ENCODE measurements at regions of chr3 and their contacts with region 1.

Region 1: DNA sequence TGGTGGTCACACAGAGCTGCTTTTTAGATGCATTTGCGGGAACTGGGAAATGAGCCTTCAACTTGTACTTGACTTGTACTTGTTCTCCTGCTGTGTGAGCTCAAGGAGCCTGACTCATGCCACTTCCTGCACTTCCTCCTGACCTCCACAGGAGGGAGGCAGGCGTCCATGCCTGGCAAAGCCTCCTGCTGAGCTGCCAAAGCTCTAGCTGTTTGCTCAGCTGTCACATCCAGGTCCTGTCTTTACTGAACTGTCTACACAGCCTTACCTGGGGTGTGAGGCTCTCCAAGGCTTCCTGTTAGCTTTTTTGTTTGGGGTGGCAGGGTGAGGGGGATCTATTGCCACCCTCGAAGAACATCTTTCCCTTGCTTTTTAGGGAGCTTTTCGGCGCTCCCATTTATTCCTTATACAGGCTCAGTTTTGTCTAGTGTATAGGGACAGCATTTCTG is 6.4 kb downstream of the THPO start:
- DNase-seq: peak; percentile 78
- ATAC-seq: peak; percentile 99
- H3K4me3 Mint-ChIP-seq: no peak overlapping the region
- H3K27ac Mint-ChIP-seq: no peak overlapping the region
- H3K4me1 Mint-ChIP-seq: peaks cover 9% of the 10 kb centered on the region
- H3K27me3 Mint-ChIP-seq: peaks cover 24% of the 10 kb centered on the region

Region 2: DNA sequence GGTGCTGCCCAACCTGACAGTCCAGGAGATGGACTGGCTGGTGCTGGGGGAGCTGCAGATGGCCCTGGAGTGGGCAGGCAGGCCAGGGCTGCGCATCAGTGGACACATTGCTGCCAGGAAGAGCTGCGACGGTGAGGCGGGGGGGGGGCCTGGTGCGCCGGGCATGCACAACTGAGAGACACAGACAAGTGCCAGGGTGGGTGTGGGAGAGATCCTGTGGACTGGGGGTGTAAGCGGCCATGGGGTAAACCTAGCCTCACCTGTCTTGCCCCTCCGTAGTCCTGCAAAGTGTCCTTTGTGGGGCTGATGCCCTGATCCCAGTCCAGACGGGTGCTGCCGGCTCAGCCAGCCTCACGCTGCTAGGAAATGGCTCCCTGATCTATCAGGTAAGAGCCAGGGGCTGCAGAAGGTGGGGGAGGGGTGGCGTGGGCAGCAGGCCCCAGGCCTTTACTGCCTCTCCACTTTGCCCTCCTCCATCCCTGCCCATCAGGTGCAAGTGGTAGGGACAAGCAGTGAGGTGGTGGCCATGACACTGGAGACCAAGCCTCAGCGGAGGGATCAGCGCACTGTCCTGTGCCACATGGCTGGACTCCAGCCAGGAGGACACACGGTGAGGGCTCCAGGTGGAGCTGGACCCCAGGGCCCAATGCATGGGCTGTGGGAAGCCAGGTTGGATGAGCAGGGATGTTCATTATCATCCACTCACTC is 11.6 kb after region 1 on chr3:
- CTCF ChIA-PET with region 1: interaction called, 21 read pairs
- DNase-seq: no peak
- ATAC-seq: no peak
- H3K4me3 Mint-ChIP-seq: no peak overlapping the region
- H3K27ac Mint-ChIP-seq: no peak overlapping the region
- H3K4me1 Mint-ChIP-seq: peaks cover 4% of the 10 kb centered on the region
- H3K27me3 Mint-ChIP-seq: peaks cover 42% of the 10 kb centered on the region

Region 3: GRCh38 chr3:184513276-184514170 is 141.9 kb after region 1 on chr3:
- CTCF ChIA-PET with region 1: interaction called, 36 read pairs
- DNase-seq: peak; percentile 87
- ATAC-seq: peak; percentile 99
- H3K4me3 Mint-ChIP-seq: peak overlapping the region; percentile 19
- H3K27ac Mint-ChIP-seq: no peak overlapping the region
- H3K4me1 Mint-ChIP-seq: peaks cover 10% of the 10 kb centered on the region
- H3K27me3 Mint-ChIP-seq: peaks cover 74% of the 10 kb centered on the region

Region 4: GRCh38 chr3:184538600-184539431 is 167.2 kb after region 1 on chr3:
- CTCF ChIA-PET with region 1: interaction called, 48 read pairs
- DNase-seq: peak; percentile 34
- ATAC-seq: no peak
- H3K4me3 Mint-ChIP-seq: no peak overlapping the region
- H3K27ac Mint-ChIP-seq: no peak overlapping the region
- H3K4me1 Mint-ChIP-seq: peaks cover 2% of the 10 kb centered on the region
- H3K27me3 Mint-ChIP-seq: peaks cover 48% of the 10 kb centered on the region

Region 5: GRCh38 chr3:184561061-184561912 is 189.7 kb after region 1 on chr3 and contains the start of gene EPHB3:
- CTCF ChIA-PET with region 1: interaction called, 10 read pairs
- DNase-seq: peak; percentile 94
- ATAC-seq: peak; percentile 89
- H3K4me3 Mint-ChIP-seq: peak within 1 kb of the TSS; percentile 23
- H3K27ac Mint-ChIP-seq: no peak within 1 kb of the TSS
- H3K4me1 Mint-ChIP-seq: peaks cover 9% of the 10 kb centered on the region
- H3K27me3 Mint-ChIP-seq: peaks cover 73% of the 10 kb centered on the region
- total RNA-seq, gene EPHB3: not detected

Region 6: DNA sequence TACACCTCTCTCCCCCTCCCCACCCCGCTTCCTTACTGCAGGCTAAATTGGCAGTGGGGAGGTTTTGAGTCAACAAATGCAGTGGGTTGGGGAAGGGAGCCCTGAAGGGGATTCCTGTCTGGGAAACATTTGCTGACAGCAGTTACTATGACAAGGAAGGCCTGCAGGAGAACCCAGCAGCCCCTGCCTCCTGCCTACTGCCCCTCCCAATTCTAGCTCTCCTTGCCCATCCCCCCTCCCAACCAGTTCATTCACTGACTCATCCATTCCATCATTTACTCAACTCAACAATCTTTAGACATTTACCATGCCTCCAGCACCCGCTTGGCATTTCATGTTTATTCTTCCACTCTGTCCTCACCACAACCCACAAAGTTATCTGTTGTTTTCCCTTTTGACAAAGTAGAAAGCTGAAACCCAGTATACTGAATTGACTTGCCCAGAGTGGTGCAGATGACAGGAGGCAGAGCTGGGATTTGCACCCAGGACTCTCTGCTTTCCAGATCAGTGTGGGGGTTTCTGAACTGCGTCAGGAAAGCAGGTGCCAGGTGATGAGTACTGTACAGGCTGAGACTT is 265.2 kb after region 1 on chr3:
- CTCF ChIA-PET with region 1: no interaction called
- DNase-seq: peak; percentile 68
- ATAC-seq: peak; percentile 74
- H3K4me3 Mint-ChIP-seq: no peak overlapping the region
- H3K27ac Mint-ChIP-seq: no peak overlapping the region
- H3K4me1 Mint-ChIP-seq: peaks cover 3% of the 10 kb centered on the region
- H3K27me3 Mint-ChIP-seq: peaks cover 7% of the 10 kb centered on the region

Measured in activated CD8-positive, alpha-beta memory T cell treated with anti-CD3 and anti-CD28 coated beads, Interleukin-2, amount 10 ng/mL, durations not matched to agents 7 days and 5 days (primary cell).